AG04450 (cell line): ENCODE measurements at regions of chr3 and their contacts with region 1.

Region 1: GRCh38 chr3:183697610-183698317 is at the start of gene YEATS2:
- DNase-seq: no peak
- H3K4me3 ChIP-seq: peak within 1 kb of the TSS; percentile 96
- H3K27ac ChIP-seq: peak within 1 kb of the TSS; percentile 68
- H3K27me3 ChIP-seq: no peaks in the 10 kb centered on the region
- CTCF ChIP-seq: no peak
- polyA plus RNA-seq, gene YEATS2: 34.8 and 38.3 TPM in 2 replicates

Region 2: DNA sequence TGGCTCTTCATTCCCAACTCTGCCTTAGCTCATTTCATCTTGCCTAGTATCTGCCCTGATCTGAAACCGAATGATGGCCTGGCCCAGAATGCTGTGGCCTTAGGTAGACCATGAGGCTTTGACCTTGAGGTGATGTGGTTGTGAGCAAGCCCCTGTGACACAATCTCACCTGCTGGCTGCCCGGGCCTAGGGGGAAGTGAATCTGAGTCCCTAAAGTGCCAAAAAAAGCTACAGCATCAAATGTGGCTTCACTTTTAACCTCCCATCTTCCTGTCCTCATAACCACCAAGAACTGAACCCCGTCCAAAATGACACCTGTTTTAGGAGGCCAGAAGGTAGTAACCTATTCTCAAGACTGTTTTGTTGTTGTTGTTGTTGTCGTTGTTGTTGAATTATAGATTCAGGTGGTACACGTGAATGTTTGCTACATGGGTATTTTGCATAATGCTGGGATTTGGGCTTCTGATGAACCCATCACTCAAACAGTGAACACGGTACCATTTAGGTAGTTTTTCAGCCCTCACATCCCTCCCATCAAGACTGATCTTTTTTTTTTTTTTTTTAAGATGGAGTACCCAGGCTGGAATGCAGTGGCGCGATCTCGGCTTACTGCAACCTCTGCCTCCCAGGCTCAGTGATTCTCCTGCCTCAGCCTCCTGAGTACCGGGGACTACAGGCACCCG is 653.1 kb before region 1 on chr3:
- CTCF ChIA-PET with region 1: interaction called, 11 read pairs
- POLR2A ChIA-PET with region 1: no interaction called
- DNase-seq: no peak
- H3K4me3 ChIP-seq: no peak overlapping the region
- H3K27ac ChIP-seq: no peak overlapping the region
- H3K27me3 ChIP-seq: no peaks in the 10 kb centered on the region
- CTCF ChIP-seq: no peak

Region 3: GRCh38 chr3:183548262-183548769 is 149.4 kb before region 1 on chr3:
- CTCF ChIA-PET with region 1: no interaction called
- POLR2A ChIA-PET with region 1: no interaction called
- DNase-seq: peak; percentile 7
- H3K4me3 ChIP-seq: no peak overlapping the region
- H3K27ac ChIP-seq: no peak overlapping the region
- H3K27me3 ChIP-seq: no peaks in the 10 kb centered on the region
- CTCF ChIP-seq: no peak

Region 4: GRCh38 chr3:183635431-183636220 is 62.1 kb before region 1 on chr3 and contains the start of gene KLHL24:
- CTCF ChIA-PET with region 1: no interaction called
- POLR2A ChIA-PET with region 1: interaction called, 18 read pairs
- DNase-seq: peak; percentile 79
- H3K4me3 ChIP-seq: peak within 1 kb of the TSS; percentile 89
- H3K27ac ChIP-seq: peak within 1 kb of the TSS; percentile 96
- H3K27me3 ChIP-seq: no peaks in the 10 kb centered on the region
- CTCF ChIP-seq: no peak
- polyA plus RNA-seq, gene KLHL24: 26.4 and 33.6 TPM in 2 replicates

Region 5: GRCh38 chr3:183718012-183718411 is 20.2 kb after region 1 on chr3:
- CTCF ChIA-PET with region 1: no interaction called
- POLR2A ChIA-PET with region 1: no interaction called
- DNase-seq: no peak
- H3K4me3 ChIP-seq: no peak overlapping the region
- H3K27ac ChIP-seq: no peak overlapping the region
- H3K27me3 ChIP-seq: no peaks in the 10 kb centered on the region
- CTCF ChIP-seq: no peak